H1 (cell line): ENCODE measurements at regions of chr5 and their contacts with region 1.

Region 1: GRCh38 chr5:170791325-170791954 is 7.9 kb downstream of the GABRP start:
- DNase-seq: peak in 1 of 2 experiments; percentile 89
- H3K4me3 ChIP-seq: no peak overlapping the region
- H3K27ac ChIP-seq: no peak overlapping the region
- H3K4me1 ChIP-seq: peaks cover 0 to 3% (median 1%) of the 10 kb centered on the region in 4 experiments; a peak in 5 of 7 replicates
- H3K27me3 ChIP-seq: no peaks in the 10 kb centered on the region; a peak in 1 of 7 replicates
- CTCF ChIP-seq: peak; percentile 59 to 91 (median 85)
- EP300 ChIP-seq: no peak
- POLR2A ChIP-seq: no peak
- RAD21 ChIP-seq: peak; percentile 99

Region 2: DNA sequence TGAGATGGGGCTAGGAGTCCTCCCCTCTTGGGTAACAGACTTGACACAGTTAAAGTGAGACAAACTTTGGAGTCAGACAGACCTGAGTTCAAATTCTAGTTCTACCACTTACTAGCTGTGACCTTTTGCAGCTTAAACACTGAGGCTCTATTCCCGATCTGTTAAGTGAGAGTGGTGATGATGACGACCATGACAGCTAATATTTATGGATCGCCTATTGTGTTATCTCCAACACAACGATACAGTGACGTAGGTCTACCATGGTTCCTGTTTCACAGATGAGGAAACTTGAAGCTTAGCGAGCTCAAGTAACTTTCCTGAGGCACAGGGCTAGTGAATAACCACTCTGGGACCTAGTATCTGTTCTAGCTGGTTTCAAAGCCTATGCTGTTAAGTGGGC is 118.2 kb before region 1 on chr5:
- CTCF ChIA-PET with region 1: no interaction called
- POLR2A ChIA-PET with region 1: no interaction called
- DNase-seq: no peak
- H3K4me3 ChIP-seq: no peak overlapping the region
- H3K27ac ChIP-seq: no peak overlapping the region
- H3K4me1 ChIP-seq: no peaks in the 10 kb centered on the region
- H3K27me3 ChIP-seq: peaks cover 0 to 4% (median 0%) of the 10 kb centered on the region in 4 experiments; a peak in 2 of 7 replicates
- CTCF ChIP-seq: no peak
- EP300 ChIP-seq: no peak
- POLR2A ChIP-seq: no peak
- RAD21 ChIP-seq: no peak

Region 3: GRCh38 chr5:170691657-170692056 is 99.8 kb before region 1 on chr5:
- CTCF ChIA-PET with region 1: interaction called, 99 read pairs
- POLR2A ChIA-PET with region 1: no interaction called
- DNase-seq: peak in 1 of 2 experiments; percentile 75
- H3K4me3 ChIP-seq: no peak overlapping the region
- H3K27ac ChIP-seq: no peak overlapping the region
- H3K4me1 ChIP-seq: no peaks in the 10 kb centered on the region
- H3K27me3 ChIP-seq: no peaks in the 10 kb centered on the region
- CTCF ChIP-seq: peak; percentile 76 to 82 (median 77)
- EP300 ChIP-seq: no peak
- POLR2A ChIP-seq: no peak
- RAD21 ChIP-seq: peak; percentile 88 to 91

Region 4: GRCh38 chr5:170704417-170705192 is 86.8 kb before region 1 on chr5:
- CTCF ChIA-PET with region 1: interaction called, 15 read pairs
- POLR2A ChIA-PET with region 1: no interaction called
- DNase-seq: no peak
- H3K4me3 ChIP-seq: no peak overlapping the region
- H3K27ac ChIP-seq: no peak overlapping the region
- H3K4me1 ChIP-seq: no peaks in the 10 kb centered on the region
- H3K27me3 ChIP-seq: no peaks in the 10 kb centered on the region
- CTCF ChIP-seq: no peak
- EP300 ChIP-seq: no peak
- POLR2A ChIP-seq: no peak
- RAD21 ChIP-seq: no peak

Region 5: DNA sequence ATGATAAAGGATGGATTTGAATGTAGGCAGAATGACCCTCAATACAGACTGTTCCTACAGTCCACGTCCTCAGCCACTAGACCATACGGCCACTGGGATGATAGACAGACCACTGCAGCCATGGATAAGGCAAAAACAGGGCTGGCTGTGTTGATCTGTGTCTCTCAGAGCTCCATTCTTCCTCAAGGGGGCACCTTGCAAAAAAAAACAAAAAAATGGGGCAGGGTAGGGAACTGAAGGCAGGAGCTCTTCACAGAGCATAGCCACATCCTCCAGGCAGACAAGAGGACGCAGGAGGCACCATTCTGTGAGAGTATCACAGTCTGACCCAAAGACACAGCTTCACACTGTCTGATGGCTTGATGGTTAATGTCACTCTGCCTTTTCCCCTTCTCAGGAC is 69.1 kb before region 1 on chr5:
- CTCF ChIA-PET with region 1: interaction called, 33 read pairs
- POLR2A ChIA-PET with region 1: no interaction called
- DNase-seq: no peak
- H3K4me3 ChIP-seq: no peak overlapping the region
- H3K27ac ChIP-seq: no peak overlapping the region
- H3K4me1 ChIP-seq: no peaks in the 10 kb centered on the region
- H3K27me3 ChIP-seq: no peaks in the 10 kb centered on the region
- CTCF ChIP-seq: peak in 1 of 3 experiments; percentile 22; a peak in 2 of 4 replicates
- EP300 ChIP-seq: no peak
- POLR2A ChIP-seq: no peak
- RAD21 ChIP-seq: no peak; a peak in 1 of 4 replicates

Region 6: DNA sequence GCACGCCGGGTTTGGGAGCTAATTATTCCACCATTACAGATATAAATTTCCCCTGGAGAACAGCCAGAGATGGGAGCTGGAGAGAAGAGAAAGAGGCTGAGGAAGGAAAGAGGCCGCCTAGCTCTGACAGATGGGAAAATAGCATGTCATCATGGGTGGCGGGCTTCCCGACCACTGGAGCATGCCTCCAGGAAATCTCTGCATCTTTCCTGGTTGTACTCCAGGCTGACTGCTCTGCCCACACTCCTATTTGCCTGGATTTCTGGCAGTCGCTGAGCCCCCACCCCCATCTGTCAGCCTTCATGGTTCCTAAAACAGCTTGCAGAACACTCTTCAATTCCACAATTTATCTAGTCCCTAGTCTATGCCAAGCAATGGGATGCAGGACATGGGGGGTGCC is 22.2 kb before region 1 on chr5:
- CTCF ChIA-PET with region 1: interaction called, 61 read pairs
- POLR2A ChIA-PET with region 1: interaction called, 8 read pairs
- DNase-seq: no peak
- H3K4me3 ChIP-seq: no peak overlapping the region
- H3K27ac ChIP-seq: no peak overlapping the region
- H3K4me1 ChIP-seq: peaks cover 4 to 16% (median 11%) of the 10 kb centered on the region in 4 experiments
- H3K27me3 ChIP-seq: no peaks in the 10 kb centered on the region; a peak in 1 of 7 replicates
- CTCF ChIP-seq: no peak
- EP300 ChIP-seq: no peak
- POLR2A ChIP-seq: no peak
- RAD21 ChIP-seq: no peak

Region 7: DNA sequence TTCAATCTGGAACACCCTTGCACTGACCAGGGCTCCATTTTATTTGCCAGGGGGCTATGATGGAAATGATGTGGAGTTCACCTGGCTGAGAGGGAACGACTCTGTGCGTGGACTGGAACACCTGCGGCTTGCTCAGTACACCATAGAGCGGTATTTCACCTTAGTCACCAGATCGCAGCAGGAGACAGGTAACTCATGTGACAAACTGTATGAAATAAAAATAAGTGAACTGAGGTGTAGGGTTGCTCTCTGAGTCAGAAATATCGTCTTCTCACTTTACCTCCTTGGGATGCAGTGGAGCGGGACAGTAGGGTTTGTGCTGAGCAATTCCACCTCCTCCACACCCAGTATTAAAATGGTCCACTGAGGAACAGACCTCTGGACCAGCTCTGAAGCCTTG is 14.2 kb after region 1 on chr5:
- CTCF ChIA-PET with region 1: interaction called, 48 read pairs
- POLR2A ChIA-PET with region 1: interaction called, 3 read pairs
- DNase-seq: no peak
- H3K4me3 ChIP-seq: no peak overlapping the region
- H3K27ac ChIP-seq: no peak overlapping the region
- H3K4me1 ChIP-seq: peaks cover 0 to 3% (median under 1%) of the 10 kb centered on the region in 4 experiments; a peak in 1 of 7 replicates
- H3K27me3 ChIP-seq: no peaks in the 10 kb centered on the region
- CTCF ChIP-seq: no peak
- EP300 ChIP-seq: no peak
- POLR2A ChIP-seq: no peak
- RAD21 ChIP-seq: no peak